ENCODE measurements at regions of chr7 and their contacts with region 1.

Region 1: GRCh38 chr7:1175967-1176851 is 16.2 kb upstream of the ZFAND2A start:
- DNase-seq: peak; percentile 56
- ATAC-seq: peak; percentile 78
- H3K4me3 ChIP-seq: peak overlapping the region; percentile 39 to 56
- H3K27ac ChIP-seq: peak overlapping the region; percentile 41
- H3K4me1 ChIP-seq: peaks cover 10 to 18% of the 10 kb centered on the region in 2 experiments
- H3K27me3 ChIP-seq: no peaks in the 10 kb centered on the region
- CTCF ChIP-seq: peak; percentile 89 to 92 (median 92)
- POLR2A ChIP-seq: no peak
- RAD21 ChIP-seq: peak; percentile 81

Region 2: DNA sequence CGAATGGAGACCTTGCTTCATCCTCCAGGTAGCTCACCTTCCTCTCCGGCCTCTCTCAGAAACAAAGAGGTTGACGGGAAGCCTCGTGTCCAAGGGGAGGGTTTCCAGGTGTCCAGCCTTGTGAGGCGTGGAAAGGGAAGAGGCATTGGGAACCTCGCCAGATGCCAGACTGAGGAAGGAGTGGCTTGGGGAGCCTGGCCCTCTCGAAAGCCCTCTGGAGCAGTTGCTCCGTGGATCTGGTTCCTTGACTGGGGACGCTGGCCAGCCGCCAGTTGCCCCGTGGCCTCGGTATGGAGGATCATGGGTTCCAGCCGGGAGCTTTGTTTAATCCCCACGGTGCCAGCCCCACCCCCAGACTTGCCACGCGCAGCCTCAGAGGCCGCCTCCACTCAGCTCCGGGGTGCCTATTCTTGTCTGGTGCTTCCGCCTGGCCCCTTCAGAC is 374.2 kb before region 1 on chr7:
- CTCF ChIA-PET with region 1: no interaction called
- POLR2A ChIA-PET with region 1: no interaction called
- RAD21 ChIA-PET with region 1: no interaction called
- intact Hi-C with region 1: no loop called
- DNase-seq: no peak
- ATAC-seq: no peak
- H3K4me3 ChIP-seq: no peak overlapping the region
- H3K27ac ChIP-seq: no peak overlapping the region
- H3K4me1 ChIP-seq: peaks cover 0 to 2% of the 10 kb centered on the region in 2 experiments; a peak in 1 of 4 replicates
- H3K27me3 ChIP-seq: no peaks in the 10 kb centered on the region
- CTCF ChIP-seq: no peak
- POLR2A ChIP-seq: no peak
- RAD21 ChIP-seq: no peak

Region 3: GRCh38 chr7:842431-843031 is 333.7 kb before region 1 on chr7:
- CTCF ChIA-PET with region 1: no interaction called
- POLR2A ChIA-PET with region 1: no interaction called
- RAD21 ChIA-PET with region 1: no interaction called
- intact Hi-C with region 1: no loop called
- DNase-seq: no peak
- ATAC-seq: no peak
- H3K4me3 ChIP-seq: no peak overlapping the region
- H3K27ac ChIP-seq: no peak overlapping the region
- H3K4me1 ChIP-seq: peaks cover 6 to 16% of the 10 kb centered on the region in 2 experiments; a peak in 3 of 4 replicates
- H3K27me3 ChIP-seq: no peaks in the 10 kb centered on the region
- CTCF ChIP-seq: no peak
- POLR2A ChIP-seq: no peak
- RAD21 ChIP-seq: no peak

Region 4: DNA sequence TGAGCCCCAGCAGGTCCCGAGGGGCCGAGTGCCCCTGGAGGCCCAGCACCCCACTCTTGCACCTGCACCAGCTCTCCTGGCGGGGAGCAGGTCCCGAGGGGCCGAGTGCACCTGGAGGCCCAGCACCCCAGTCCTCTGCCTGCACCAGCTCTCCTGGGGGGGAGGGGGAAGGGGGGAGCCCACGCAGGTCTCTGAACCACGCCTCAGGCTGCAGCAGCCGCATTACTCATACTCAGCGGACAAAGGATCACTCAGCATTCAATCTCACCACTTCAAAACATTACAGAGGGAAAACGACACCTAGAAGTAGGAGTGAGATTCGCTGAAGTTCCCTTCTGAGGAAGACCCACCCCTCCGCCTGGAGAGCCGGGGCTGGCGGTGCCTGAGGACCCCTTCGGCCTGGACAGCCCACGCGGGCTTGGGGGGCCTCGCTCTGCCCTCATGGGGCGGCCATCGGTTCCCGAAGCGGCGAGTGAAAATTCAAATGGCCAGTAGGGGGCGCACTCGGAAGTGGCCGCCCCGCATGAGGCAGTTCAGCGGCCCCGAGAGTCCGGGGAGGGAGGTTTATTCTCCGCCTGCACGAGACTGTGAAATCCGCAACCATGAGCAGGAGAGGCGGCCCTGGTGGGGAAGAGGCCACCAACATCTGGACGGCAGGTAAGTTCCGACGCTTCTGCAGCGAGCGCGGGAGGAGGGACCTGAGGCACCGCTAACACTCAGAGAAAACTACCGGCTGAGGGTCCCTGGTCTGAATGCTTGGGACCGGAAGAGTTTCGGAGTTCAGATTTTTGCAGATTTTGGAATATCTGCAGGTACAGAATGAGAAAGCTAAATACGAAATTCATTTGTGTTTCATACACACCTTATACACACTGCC is 89.4 kb before region 1 on chr7:
- CTCF ChIA-PET with region 1: interaction called, 4 read pairs
- POLR2A ChIA-PET with region 1: no interaction called
- RAD21 ChIA-PET with region 1: no interaction called
- intact Hi-C with region 1: loop called (anchors 2 kb)
- DNase-seq: peak; percentile 34
- ATAC-seq: peak; percentile 85
- H3K4me3 ChIP-seq: peak overlapping the region; percentile 36 to 50
- H3K27ac ChIP-seq: peak overlapping the region; percentile 49
- H3K4me1 ChIP-seq: peaks cover 26 to 33% of the 10 kb centered on the region in 2 experiments
- H3K27me3 ChIP-seq: no peaks in the 10 kb centered on the region
- CTCF ChIP-seq: peak; percentile 76 to 91 (median 87)
- POLR2A ChIP-seq: no peak
- RAD21 ChIP-seq: peak; percentile 60

Measured in HCT116 (cell line).